ENCODE measurements at regions of chr2 and their contacts with region 1.

Region 1: GRCh38 chr2:43100883-43101662 is 125.3 kb downstream of the ZFP36L2 start:
- DNase-seq: peak in 1 of 2 donors; percentile 62
- ATAC-seq: peak; percentile 64 to 68
- H3K4me3 ChIP-seq: peak overlapping the region; percentile 62 to 76 (median 74)
- H3K27ac ChIP-seq: peak overlapping the region; percentile 76 to 92 (median 90)
- H3K4me1 ChIP-seq: peaks cover 8 to 25% of the 10 kb centered on the region in 2 donors
- H3K27me3 ChIP-seq: no peaks in the 10 kb centered on the region
- CTCF ChIP-seq: no peak
- POLR2A ChIP-seq: peak in 1 of 2 donors; percentile 17

Region 2: DNA sequence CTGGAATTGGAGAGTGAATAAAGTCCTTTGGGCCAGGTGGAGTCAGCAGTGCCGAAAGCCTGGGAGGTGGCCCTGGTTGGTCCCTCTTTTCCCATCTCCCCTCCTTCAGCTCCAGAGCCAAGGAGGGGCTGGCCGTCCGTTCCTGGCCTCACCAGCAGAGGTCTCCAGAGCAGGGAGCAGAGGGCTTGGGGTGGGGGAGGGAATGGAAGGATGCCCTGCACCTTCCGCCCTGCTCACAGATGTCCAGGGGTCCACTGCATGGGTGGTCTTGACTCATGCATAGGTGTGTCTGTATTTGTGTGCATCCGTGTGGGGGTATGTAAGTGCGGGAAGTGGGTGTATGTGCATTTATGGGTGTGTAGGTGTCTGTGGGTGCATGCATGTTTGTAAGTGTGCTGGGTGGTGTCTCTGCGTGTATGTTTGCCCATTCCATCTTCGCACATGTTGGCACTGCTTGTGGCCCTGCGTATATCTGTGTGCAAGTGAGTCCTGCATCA is 76.5 kb before region 1 on chr2:
- in situ Hi-C with region 1: no loop called
- intact Hi-C with region 1: loop called (anchors 5 kb)
- DNase-seq: peak; percentile 27 to 57
- ATAC-seq: peak; percentile 43 to 54
- H3K4me3 ChIP-seq: no peak overlapping the region
- H3K27ac ChIP-seq: no peak overlapping the region
- H3K4me1 ChIP-seq: peaks cover 3 to 7% of the 10 kb centered on the region in 2 donors
- H3K27me3 ChIP-seq: no peaks in the 10 kb centered on the region
- CTCF ChIP-seq: peak; percentile 57 to 90 (median 84)
- POLR2A ChIP-seq: no peak

Region 3: DNA sequence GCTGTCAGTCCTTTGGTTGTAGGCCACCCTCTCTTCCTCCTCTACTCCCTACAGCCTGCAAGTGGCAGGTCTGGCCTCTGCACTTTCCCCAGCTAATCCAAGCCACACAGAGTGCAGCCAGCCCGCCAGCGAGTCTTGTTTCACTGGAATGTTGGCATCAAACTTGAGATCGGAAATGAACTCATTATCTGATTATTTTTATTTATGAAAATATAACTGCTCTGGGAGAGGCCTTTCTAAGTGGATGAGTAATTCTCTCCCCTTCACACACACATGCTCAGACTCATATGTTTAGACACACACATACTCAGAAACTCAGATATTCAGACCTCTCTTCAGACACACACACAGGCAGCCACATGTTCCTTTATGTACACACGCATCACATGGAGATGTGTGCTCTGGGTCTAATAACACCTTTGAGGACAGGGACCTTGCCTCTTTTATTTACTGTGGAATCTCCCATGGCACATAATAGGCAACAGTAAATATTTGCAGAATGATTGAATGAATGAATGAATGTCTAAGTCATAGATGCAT is 25.9 kb before region 1 on chr2:
- in situ Hi-C with region 1: no loop called
- intact Hi-C with region 1: loop called (anchors 2 kb)
- DNase-seq: peak; percentile 76 to 77
- ATAC-seq: peak; percentile 77 to 87
- H3K4me3 ChIP-seq: no peak overlapping the region
- H3K27ac ChIP-seq: peak overlapping the region; percentile 80 to 81 (median 80)
- H3K4me1 ChIP-seq: peaks cover 55 to 64% of the 10 kb centered on the region in 2 donors
- H3K27me3 ChIP-seq: no peaks in the 10 kb centered on the region
- CTCF ChIP-seq: peak in 2 of 5 experiments; percentile 20 to 28
- POLR2A ChIP-seq: no peak

Region 4: GRCh38 chr2:43142921-43143438 is 41.9 kb after region 1 on chr2:
- in situ Hi-C with region 1: no loop called
- intact Hi-C with region 1: no loop called
- DNase-seq: no peak
- ATAC-seq: no peak
- H3K4me3 ChIP-seq: no peak overlapping the region
- H3K27ac ChIP-seq: no peak overlapping the region
- H3K4me1 ChIP-seq: peaks cover under 1 to 5% of the 10 kb centered on the region in 2 donors
- H3K27me3 ChIP-seq: no peaks in the 10 kb centered on the region
- CTCF ChIP-seq: no peak
- POLR2A ChIP-seq: no peak